Breast epithelium (tissue), 4 donors: ENCODE measurements at regions of chr4 and their contacts with region 1.

Region 1: GRCh38 chr4:172897046-172897560 is 271.5 kb upstream of the GALNT7 start:
- DNase-seq: no peak
- H3K4me3 ChIP-seq: no peak overlapping the region
- H3K27ac ChIP-seq: no peak overlapping the region
- H3K4me1 ChIP-seq: no peaks in the 10 kb centered on the region
- H3K27me3 ChIP-seq: no peaks in the 10 kb centered on the region
- CTCF ChIP-seq: no peak
- POLR2A ChIP-seq: no peak

Region 2: GRCh38 chr4:172881645-172882044 is 15.5 kb before region 1 on chr4:
- intact Hi-C with region 1: loop called (anchors 1 kb)
- DNase-seq: no peak
- H3K4me3 ChIP-seq: no peak overlapping the region
- H3K27ac ChIP-seq: no peak overlapping the region
- H3K4me1 ChIP-seq: no peaks in the 10 kb centered on the region
- H3K27me3 ChIP-seq: no peaks in the 10 kb centered on the region
- CTCF ChIP-seq: no peak
- POLR2A ChIP-seq: no peak